ENCODE measurements at regions of chr11 and their contacts with region 1.

Region 1: GRCh38 chr11:87421422-87421821 is 383.7 kb downstream of the TMEM135 start:
- DNase-seq: no peak
- ATAC-seq: peak; percentile 81

Region 2: GRCh38 chr11:86938900-86939880 is 482.2 kb before region 1 on chr11:
- intact Hi-C with region 1: loop called (anchors 1 kb)
- DNase-seq: no peak
- ATAC-seq: no peak

Region 3: GRCh38 chr11:87352759-87353707 is 68.4 kb before region 1 on chr11:
- intact Hi-C with region 1: loop called (anchors 1 kb)
- DNase-seq: peak; percentile 93
- ATAC-seq: peak; percentile 92